Endothelial cell of umbilical vein (primary cell): ENCODE measurements at regions of chr11 and their contacts with region 1.

Region 1: DNA sequence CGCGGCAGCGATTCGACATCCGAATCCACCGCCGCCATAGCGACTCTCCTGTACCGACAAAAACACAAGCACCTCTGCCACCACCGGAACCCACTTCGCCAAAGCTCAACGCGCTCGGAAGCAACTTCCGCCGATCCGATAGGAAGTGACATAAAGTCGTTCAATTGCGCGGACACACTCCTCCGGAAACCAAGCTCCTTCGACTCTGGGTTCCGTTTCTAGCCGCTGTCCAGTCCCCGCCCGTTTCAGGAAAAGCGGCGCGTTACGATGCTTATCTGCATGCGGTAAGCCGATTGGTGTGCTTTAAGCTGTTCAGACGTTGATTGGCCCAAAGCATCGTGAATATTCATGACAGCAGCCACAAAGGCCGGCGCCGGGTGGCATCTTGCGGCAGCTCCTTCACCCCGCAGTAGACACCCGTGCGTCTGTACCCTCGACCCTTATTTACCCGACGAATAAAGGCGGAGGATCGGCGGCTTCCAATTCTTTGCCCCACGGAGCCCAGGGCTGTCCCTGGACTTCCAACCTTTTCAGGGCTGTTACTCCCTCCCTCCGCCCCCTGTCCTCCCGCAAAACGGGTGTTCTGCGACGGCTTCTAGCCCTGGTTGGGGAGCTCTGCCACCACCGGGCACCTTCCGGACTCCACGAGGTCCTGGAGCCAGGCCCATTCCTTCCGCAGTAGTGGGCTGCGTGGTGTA is at the start of gene TUT1:
- DNase-seq: peak; percentile 99
- H3K4me3 ChIP-seq: peak within 1 kb of the TSS; percentile 67 to 87 (median 82)
- H3K27ac ChIP-seq: peak within 1 kb of the TSS; percentile 82
- H3K4me1 ChIP-seq: peaks cover 18% of the 10 kb centered on the region
- H3K27me3 ChIP-seq: no peaks in the 10 kb centered on the region
- CTCF ChIP-seq: no peak
- POLR2A ChIP-seq: peak; percentile 99
- total RNA-seq, gene TUT1: 16.9 and 17.8 TPM in 2 replicates

Region 2: GRCh38 chr11:62245271-62245753 is 346.3 kb before region 1 on chr11:
- CTCF ChIA-PET with region 1: no interaction called
- POLR2A ChIA-PET with region 1: no interaction called
- dilution Hi-C with region 1: no loop called
- intact Hi-C with region 1: no loop called
- DNase-seq: peak; percentile 51
- H3K4me3 ChIP-seq: no peak overlapping the region
- H3K27ac ChIP-seq: no peak overlapping the region
- H3K4me1 ChIP-seq: no peaks in the 10 kb centered on the region
- H3K27me3 ChIP-seq: peaks cover 0 to 5% of the 10 kb centered on the region in 2 experiments
- CTCF ChIP-seq: peak; percentile 18 to 23
- POLR2A ChIP-seq: no peak

Region 3: GRCh38 chr11:62479631-62480201 is 111.9 kb before region 1 on chr11:
- CTCF ChIA-PET with region 1: no interaction called
- POLR2A ChIA-PET with region 1: no interaction called
- dilution Hi-C with region 1: no loop called
- intact Hi-C with region 1: no loop called
- DNase-seq: no peak
- H3K4me3 ChIP-seq: no peak overlapping the region
- H3K27ac ChIP-seq: no peak overlapping the region
- H3K4me1 ChIP-seq: no peaks in the 10 kb centered on the region
- H3K27me3 ChIP-seq: no peaks in the 10 kb centered on the region
- CTCF ChIP-seq: no peak
- POLR2A ChIP-seq: no peak

Region 4: GRCh38 chr11:62556108-62556871 is 35.3 kb before region 1 on chr11:
- CTCF ChIA-PET with region 1: interaction called, 16 read pairs
- POLR2A ChIA-PET with region 1: interaction called, 5 read pairs
- dilution Hi-C with region 1: no loop called
- intact Hi-C with region 1: no loop called
- DNase-seq: peak; percentile 94
- H3K4me3 ChIP-seq: peak overlapping the region in 1 of 3 experiments; percentile 6
- H3K27ac ChIP-seq: peak overlapping the region; percentile 56
- H3K4me1 ChIP-seq: peaks cover 75% of the 10 kb centered on the region
- H3K27me3 ChIP-seq: no peaks in the 10 kb centered on the region
- CTCF ChIP-seq: no peak
- POLR2A ChIP-seq: peak; percentile 80

Region 5: DNA sequence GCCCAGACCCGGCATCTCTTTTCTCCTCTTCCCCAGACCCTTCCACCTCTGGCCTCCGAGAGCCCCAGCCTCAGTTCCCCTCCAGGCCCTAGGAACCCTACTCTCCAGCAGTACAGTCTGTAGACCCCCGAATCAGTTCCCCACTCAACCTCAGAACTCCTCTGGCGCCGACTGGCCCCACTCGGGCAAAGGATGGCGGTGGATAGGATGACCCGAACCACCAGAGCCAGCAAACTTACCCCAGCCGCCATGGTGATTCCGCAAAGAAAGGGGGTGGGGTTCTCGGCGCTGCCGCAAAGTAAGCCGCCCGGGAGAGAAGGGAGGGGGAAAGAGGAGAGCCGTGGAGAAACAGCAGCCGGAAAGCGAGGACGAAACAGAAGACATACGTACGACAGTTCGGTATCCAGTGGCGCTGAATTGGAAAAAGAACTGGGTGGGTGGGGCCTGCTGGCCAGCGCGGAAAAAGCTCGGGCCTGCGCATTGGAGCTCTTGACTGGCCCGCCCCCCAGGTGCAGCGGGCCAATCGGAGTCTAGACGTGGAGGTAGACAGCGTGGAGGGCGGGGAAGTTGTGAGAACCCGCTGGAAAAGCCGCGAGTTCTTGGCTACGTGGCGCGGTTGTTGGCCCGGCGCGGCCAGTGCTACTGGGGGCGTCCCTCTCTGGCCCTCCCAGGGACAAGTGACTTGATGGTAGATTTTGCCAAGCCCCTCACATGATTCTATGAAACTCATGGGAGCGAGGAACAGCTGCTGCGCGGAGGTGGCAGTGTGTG is 17.8 kb before region 1 on chr11 and contains the start of gene EEF1G:
- CTCF ChIA-PET with region 1: interaction called, 31 read pairs
- POLR2A ChIA-PET with region 1: interaction called, 75 read pairs
- dilution Hi-C with region 1: no loop called
- intact Hi-C with region 1: loop called (anchors 1 kb)
- DNase-seq: peak; percentile 100
- H3K4me3 ChIP-seq: peak within 1 kb of the TSS; percentile 51 to 85 (median 70)
- H3K27ac ChIP-seq: peak within 1 kb of the TSS; percentile 99
- H3K4me1 ChIP-seq: peaks cover 59% of the 10 kb centered on the region
- H3K27me3 ChIP-seq: no peaks in the 10 kb centered on the region
- CTCF ChIP-seq: no peak
- POLR2A ChIP-seq: peak; percentile 96
- total RNA-seq, gene EEF1G: 1,341 and 1,345 TPM in 2 replicates

Region 6: GRCh38 chr11:62612366-62613290 is 21.0 kb after region 1 on chr11 and contains the starts of genes EML3 and ROM1:
- CTCF ChIA-PET with region 1: interaction called, 48 read pairs
- POLR2A ChIA-PET with region 1: interaction called, 6 read pairs
- dilution Hi-C with region 1: no loop called
- intact Hi-C with region 1: loop called (anchors 1 kb)
- DNase-seq: peak; percentile 80
- H3K4me3 ChIP-seq: peak within 1 kb of the TSS; percentile 61 to 74 (median 67)
- H3K27ac ChIP-seq: peak within 1 kb of the TSS; percentile 30
- H3K4me1 ChIP-seq: peaks cover 22% of the 10 kb centered on the region
- H3K27me3 ChIP-seq: no peaks in the 10 kb centered on the region
- CTCF ChIP-seq: peak; percentile 88 to 89
- POLR2A ChIP-seq: peak; percentile 41
- total RNA-seq, gene EML3: 101 and 110 TPM in 2 replicates
- total RNA-seq, gene ROM1: 8.2 and 8.8 TPM in 2 replicates

Region 7: GRCh38 chr11:62621567-62622470 is 30.2 kb after region 1 on chr11 and contains the start of gene B3GAT3:
- CTCF ChIA-PET with region 1: interaction called, 9 read pairs
- POLR2A ChIA-PET with region 1: interaction called, 5 read pairs
- dilution Hi-C with region 1: no loop called
- intact Hi-C with region 1: loop called (anchors 2 kb)
- DNase-seq: peak; percentile 96
- H3K4me3 ChIP-seq: peak within 1 kb of the TSS; percentile 14 to 80 (median 66)
- H3K27ac ChIP-seq: peak within 1 kb of the TSS; percentile 88
- H3K4me1 ChIP-seq: peaks cover 15% of the 10 kb centered on the region
- H3K27me3 ChIP-seq: no peaks in the 10 kb centered on the region
- CTCF ChIP-seq: no peak
- POLR2A ChIP-seq: peak; percentile 95
- total RNA-seq, gene B3GAT3: 31.6 and 35.0 TPM in 2 replicates

Region 8: GRCh38 chr11:62645956-62646824 is 54.6 kb after region 1 on chr11 and contains the start of gene GANAB:
- CTCF ChIA-PET with region 1: interaction called, 4 read pairs
- POLR2A ChIA-PET with region 1: interaction called, 10 read pairs
- dilution Hi-C with region 1: no loop called
- intact Hi-C with region 1: no loop called
- DNase-seq: peak; percentile 97
- H3K4me3 ChIP-seq: peak within 1 kb of the TSS; percentile 62 to 87 (median 65)
- H3K27ac ChIP-seq: peak within 1 kb of the TSS; percentile 80
- H3K4me1 ChIP-seq: peaks cover 11% of the 10 kb centered on the region
- H3K27me3 ChIP-seq: no peaks in the 10 kb centered on the region
- CTCF ChIP-seq: no peak
- POLR2A ChIP-seq: peak; percentile 97
- total RNA-seq, gene GANAB: 357 and 389 TPM in 2 replicates

Region 9: DNA sequence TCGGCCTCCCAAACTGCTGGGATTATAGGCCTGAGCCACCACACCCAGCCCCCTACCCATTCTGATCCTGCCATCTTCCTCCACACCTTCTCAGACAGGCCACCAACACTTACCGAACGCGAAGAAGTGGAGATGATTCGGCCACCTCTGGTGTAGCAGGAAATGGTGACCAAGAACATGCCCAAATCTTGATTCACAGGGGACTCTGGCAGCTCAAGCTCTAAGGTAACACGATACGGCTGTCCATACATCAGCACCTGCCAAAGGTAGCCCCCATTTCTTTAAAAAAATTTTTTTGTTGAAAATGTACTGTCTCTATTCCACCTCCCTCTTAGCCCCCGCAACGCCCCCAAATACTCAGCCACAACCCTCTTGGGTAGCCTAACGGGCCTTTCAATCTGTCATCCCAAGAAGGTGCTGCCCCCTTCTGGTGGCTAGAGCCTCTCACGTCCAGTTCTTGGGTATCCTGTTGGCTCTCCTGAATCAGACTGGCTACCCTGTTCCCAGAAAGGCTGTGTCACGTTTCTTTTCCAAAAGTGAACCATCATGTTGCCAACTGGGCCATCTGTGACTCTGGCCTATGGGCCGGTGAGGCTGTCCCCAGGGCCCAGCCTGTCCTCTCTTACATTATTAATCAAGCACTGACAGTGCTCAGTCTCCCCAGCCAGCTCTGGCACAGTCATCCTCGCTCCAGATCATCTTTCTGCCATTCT is 103.0 kb after region 1 on chr11:
- CTCF ChIA-PET with region 1: interaction called, 7 read pairs
- POLR2A ChIA-PET with region 1: no interaction called
- dilution Hi-C with region 1: no loop called
- intact Hi-C with region 1: loop called (anchors 1 kb)
- DNase-seq: peak; percentile 68
- H3K4me3 ChIP-seq: no peak overlapping the region
- H3K27ac ChIP-seq: no peak overlapping the region
- H3K4me1 ChIP-seq: no peaks in the 10 kb centered on the region
- H3K27me3 ChIP-seq: no peaks in the 10 kb centered on the region
- CTCF ChIP-seq: peak; percentile 80 to 83
- POLR2A ChIP-seq: no peak